ENCODE measurements at regions of chr17 and their contacts with region 1.

Region 1: DNA sequence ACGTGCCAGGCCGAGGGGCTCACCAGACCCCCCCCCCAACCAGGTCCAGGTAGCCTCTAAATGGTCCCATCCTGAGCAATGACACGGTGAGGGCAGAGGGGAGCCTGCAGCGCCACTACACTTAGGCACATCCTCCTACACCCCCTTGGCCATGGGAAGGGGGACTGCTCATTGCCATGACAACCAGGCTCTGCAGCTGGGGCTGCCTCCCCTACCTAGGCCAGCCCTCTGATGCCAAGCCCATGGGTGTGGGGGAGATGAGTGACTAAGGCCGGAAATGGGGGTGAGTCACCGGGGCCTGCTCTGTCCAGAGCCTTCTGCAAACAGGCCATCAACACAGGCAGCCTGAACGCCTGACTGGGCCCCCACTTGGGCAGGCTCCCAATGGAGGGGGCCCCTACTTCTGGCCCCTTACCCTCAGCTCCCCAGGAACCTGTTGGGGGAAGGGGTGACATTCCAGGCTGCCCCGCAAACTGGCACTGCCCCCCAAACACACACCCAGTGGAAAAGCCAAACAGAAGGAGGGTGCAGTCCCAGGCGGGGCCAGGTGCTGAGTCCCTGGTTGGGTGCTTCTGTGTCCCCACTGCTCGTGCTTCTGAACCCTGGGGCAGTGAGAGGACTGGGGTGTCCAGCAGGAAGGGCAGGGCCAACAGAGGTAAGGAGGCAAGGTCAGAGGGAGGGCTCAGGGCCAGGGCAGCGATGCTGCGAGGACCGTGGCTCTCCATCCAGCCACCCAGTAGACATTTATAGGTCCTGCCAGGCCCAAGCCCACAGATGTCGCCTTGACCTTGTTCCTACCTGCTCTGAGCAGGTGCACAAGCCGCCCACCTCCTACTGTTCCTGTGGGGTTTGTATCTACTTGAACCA is 8.2 kb downstream of the PLCD3 start:
- DNase-seq: peak; percentile 71
- H3K4me3 ChIP-seq: no peak overlapping the region
- H3K27ac ChIP-seq: peak overlapping the region; percentile 83
- H3K27me3 ChIP-seq: no peaks in the 10 kb centered on the region
- CTCF ChIP-seq: no peak

Region 2: DNA sequence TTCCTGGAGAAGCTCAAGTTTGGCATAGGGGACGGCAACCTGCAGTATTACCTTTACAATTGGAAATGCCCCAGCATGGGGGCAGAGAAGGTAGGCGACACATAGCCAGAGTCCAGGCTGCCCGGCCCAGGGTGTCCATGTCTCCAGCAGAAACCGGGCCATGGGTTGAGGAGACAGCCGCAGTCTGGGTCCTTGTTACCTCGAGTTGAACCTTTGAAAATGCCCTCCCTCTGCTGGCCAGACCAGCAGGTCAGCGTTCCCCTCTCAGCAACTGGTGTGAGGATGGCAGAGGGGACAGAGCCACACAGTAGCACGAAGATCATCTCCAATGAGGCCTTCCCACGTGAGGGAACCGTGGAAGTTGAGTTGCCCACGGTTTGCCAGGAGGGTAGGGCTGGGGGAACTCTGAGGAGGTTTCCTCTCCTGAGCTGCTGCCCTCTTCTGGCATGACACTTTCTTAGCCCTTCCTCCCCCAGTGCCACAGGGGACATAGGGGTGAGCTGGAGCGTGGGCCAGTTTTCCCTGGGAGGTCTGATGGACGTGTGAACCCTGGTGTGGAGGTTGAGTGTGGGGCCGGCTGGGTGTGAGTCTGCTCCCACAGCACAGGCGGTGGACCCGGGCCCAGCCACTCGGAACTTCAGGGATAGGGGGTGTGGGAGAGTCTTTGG is 19.1 kb before region 1 on chr17:
- CTCF ChIA-PET with region 1: interaction called, 11 read pairs
- POLR2A ChIA-PET with region 1: interaction called, 13 read pairs
- DNase-seq: no peak
- H3K4me3 ChIP-seq: no peak overlapping the region
- H3K27ac ChIP-seq: no peak overlapping the region
- H3K27me3 ChIP-seq: no peaks in the 10 kb centered on the region
- CTCF ChIP-seq: no peak